ENCODE measurements at regions of chr1 and their contacts with region 1.

Region 1: DNA sequence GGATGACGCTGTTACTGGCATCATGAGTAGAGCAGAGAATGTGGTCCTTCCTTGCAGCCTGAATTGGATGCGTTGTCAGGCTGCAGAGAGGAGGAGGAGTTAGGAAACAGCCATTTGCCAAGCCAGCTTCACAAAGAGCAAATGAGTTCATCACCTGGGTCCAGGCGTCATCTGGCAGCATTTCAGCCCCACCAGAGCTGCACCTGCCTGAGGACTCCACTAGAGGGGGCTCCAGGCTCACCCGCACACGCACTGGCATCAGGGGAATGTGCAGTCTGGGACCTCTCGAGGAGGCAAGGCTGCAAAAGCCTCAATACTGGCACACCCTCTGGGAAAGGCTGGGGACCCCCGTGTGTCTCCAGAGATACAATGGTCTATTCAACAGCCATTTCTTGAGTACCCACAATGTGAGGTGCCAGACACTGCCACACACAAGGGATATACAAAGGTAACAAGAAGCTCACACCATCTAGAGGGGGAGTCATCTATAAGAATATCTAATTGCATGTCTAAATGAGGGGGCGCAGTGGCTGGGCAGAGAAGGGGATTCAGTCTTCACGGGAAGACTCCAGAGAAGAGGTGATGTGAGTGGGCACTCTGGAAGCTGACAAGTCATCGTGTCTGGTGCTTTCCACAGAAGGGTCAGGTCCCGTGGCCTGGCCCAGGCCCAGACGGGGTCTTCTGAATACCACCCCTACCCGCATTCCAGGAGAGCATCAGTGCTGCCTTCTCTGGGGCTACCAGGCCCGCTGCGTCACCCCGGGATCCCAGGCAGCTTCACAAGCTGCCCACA is 53.5 kb upstream of the CNTN2 start:
- DNase-seq: peak; percentile 67
- ATAC-seq: peak; percentile 98
- H3K4me3 ChIP-seq: no peak overlapping the region
- H3K27ac ChIP-seq: no peak overlapping the region
- H3K4me1 ChIP-seq: no peaks in the 10 kb centered on the region
- H3K27me3 ChIP-seq: peaks cover 47% of the 10 kb centered on the region
- CTCF ChIP-seq: peak; percentile 97
- POLR2A ChIP-seq: no peak
- RAD21 ChIP-seq: peak; percentile 97

Region 2: DNA sequence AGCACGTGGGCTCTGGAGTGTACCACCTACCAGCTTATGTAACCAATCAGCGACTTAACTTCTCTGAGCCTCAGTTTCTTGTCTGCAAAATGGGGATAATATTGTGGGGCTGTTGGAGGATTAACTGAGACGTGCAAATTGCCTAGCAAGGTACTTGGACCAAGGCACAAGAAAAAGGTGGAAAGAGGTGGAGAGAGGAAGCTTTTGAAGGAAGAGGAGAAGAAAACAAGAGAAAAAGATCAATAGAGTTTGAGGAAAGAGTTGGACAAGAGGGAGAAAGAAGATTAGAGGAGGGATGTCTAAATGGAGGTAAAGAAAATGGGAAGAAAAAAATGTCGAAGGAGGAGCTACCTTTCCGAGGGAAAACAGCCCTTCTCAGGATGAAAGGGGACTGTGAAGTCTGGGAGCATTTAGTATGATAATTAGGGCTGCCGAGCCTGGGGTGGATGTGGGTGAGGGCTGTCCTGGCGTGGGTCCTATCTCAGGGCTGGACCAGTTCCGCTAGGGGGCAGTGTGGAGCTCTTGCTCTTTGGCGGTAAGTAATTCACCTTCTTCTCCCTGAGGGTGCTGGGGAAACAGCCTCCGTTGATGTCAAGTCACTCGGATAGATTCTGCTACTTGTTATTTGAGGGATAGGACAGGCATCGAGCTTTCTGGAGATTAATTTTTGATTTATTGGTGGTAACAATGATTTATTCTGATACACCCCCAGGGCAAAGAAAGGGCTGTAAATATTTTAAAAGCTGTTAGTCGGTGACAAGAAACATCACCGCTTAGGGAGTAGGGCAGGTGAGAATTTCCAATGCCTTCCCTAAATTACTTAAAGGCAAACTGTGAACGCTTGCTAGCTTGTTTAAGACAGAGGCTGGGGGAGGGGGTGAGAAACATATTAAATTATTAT is 197.8 kb before region 1 on chr1:
- CTCF ChIA-PET with region 1: no interaction called
- POLR2A ChIA-PET with region 1: no interaction called
- dilution Hi-C with region 1: no loop called
- in situ Hi-C with region 1: no loop called
- intact Hi-C with region 1: no loop called
- DNase-seq: peak; percentile 35
- ATAC-seq: peak; percentile 51; the same call in 1 of the 2 replicates
- H3K4me3 ChIP-seq: no peak overlapping the region
- H3K27ac ChIP-seq: no peak overlapping the region
- H3K4me1 ChIP-seq: no peaks in the 10 kb centered on the region
- H3K27me3 ChIP-seq: no peaks in the 10 kb centered on the region; the same call in none of the 2 replicates
- CTCF ChIP-seq: peak; percentile 52
- POLR2A ChIP-seq: no peak
- RAD21 ChIP-seq: no peak; the same call in 1 of the 2 replicates

Region 3: DNA sequence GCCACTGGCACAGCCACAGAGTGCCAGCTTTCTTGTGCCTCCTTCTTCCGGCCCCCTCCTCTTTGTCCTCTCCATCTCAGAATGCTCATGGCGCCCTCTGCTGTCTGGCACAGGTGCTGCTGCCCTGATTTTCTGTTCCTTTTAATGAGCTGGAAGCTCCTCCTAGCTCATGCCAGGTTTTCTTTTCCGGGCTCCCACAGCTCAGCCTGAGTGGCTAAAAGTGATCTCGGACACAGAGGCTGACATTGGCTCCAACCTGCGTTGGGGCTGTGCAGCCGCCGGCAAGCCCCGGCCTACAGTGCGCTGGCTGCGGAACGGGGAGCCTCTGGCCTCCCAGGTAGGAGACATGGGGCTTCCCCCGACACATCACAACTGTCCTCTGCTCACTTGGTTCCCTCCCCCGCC is 72.2 kb after region 1 on chr1:
- CTCF ChIA-PET with region 1: interaction called, 31 read pairs
- POLR2A ChIA-PET with region 1: no interaction called
- dilution Hi-C with region 1: no loop called
- in situ Hi-C with region 1: loop called (anchors 5 kb)
- intact Hi-C with region 1: loop called (anchors 1 kb)
- DNase-seq: peak; percentile 52
- ATAC-seq: peak; percentile 93
- H3K4me3 ChIP-seq: no peak overlapping the region
- H3K27ac ChIP-seq: no peak overlapping the region
- H3K4me1 ChIP-seq: no peaks in the 10 kb centered on the region
- H3K27me3 ChIP-seq: peaks cover 15% of the 10 kb centered on the region
- CTCF ChIP-seq: peak; percentile 82
- POLR2A ChIP-seq: no peak
- RAD21 ChIP-seq: peak; percentile 72

Region 4: DNA sequence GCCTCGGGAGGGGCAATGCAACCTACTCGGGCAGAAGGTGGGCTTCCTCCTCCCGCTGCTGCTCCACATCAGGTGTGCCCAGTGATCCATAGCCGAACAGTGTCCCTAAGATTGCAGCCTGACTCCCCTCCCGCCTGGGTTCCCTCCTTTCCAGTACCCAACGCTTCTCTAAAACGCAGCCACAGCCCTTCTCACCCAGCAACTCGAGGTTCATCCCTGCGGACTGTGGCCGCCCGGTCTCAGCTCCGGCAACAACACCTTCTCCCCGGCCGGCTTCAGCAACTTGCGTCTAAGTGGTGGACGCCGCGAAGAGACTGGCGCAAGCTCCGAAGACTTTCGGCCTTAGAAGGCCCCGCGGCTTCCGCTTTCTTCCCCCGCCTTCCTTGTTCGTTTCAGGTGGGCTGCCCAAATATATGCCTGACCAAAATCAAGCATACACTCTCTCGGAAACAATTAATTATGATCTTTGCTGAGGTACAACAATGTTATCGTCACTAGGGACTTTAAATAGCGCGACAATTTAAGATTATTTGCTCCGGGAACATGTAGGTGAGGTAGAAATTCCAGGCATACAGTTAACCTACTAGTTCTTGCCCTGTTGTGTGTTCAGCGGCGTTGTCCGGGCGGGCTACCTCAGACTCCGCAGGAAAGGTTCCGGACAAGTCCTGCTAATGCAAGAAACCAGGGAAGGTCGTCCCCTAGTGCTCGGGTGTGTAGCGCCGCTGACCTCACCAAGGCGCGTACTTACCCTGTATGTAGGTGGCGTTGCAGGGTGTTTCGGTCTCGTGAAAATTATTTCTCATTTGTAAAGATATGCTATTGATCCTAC is 132.4 kb after region 1 on chr1 and contains the start of gene RBBP5:
- CTCF ChIA-PET with region 1: no interaction called
- POLR2A ChIA-PET with region 1: no interaction called
- dilution Hi-C with region 1: no loop called
- in situ Hi-C with region 1: no loop called
- intact Hi-C with region 1: loop called (anchors 1 kb)
- DNase-seq: peak; percentile 98
- ATAC-seq: peak; percentile 99
- H3K4me3 ChIP-seq: peak within 1 kb of the TSS; percentile 89
- H3K27ac ChIP-seq: peak within 1 kb of the TSS; percentile 88
- H3K4me1 ChIP-seq: peaks cover 2% of the 10 kb centered on the region; the same call in 1 of the 2 replicates
- H3K27me3 ChIP-seq: no peaks in the 10 kb centered on the region
- CTCF ChIP-seq: peak; percentile 89
- POLR2A ChIP-seq: peak; percentile 95
- RAD21 ChIP-seq: peak; percentile 61
- total RNA-seq, gene RBBP5: 33.9 and 37.5 TPM in 2 replicates

Region 5: DNA sequence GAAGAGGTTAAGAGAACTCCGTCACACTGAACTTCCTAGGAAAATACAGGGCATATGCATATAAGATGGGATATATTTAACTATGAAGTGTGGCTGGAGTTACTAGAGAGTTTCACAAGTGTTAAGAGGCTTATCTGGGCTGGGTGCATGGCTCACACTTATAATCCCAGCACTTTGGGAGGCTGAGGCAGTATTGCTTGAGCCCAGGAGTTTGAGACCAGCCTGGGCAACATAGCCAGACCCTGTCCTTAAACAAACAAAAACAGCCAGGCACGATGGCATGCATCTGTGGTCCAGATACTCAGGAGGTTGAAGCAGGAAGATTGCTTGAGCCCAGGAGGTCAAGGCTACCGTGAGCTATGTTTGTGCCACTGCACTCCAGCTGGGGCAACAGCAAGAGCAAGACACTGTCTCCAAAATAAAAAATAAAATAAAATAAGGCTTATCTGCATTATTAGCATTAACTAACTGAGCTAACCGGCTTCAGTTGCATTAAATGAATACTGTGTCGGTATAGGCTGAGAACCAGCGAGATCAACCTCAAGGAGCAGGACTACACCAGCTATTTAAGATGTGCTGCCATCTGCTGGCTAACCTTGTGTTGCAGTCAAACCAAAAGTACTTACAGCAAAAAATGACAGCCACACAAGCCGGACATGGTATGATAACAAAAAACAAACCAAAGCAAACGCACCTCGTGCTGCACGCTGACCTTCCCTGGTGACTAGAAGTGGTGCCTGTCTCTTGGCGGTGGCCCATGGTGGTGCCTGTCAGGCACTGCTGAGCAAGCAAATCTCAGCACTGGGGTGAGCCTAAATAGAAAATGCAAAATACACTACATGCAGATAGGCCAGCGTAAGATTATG is 152.0 kb after region 1 on chr1:
- CTCF ChIA-PET with region 1: no interaction called
- POLR2A ChIA-PET with region 1: no interaction called
- dilution Hi-C with region 1: no loop called
- in situ Hi-C with region 1: no loop called
- intact Hi-C with region 1: loop called (anchors 1 kb)
- DNase-seq: peak; percentile 86
- ATAC-seq: peak; percentile 79
- H3K4me3 ChIP-seq: no peak overlapping the region
- H3K27ac ChIP-seq: no peak overlapping the region
- H3K4me1 ChIP-seq: peaks cover 16% of the 10 kb centered on the region
- H3K27me3 ChIP-seq: no peaks in the 10 kb centered on the region
- CTCF ChIP-seq: peak; percentile 73
- POLR2A ChIP-seq: no peak
- RAD21 ChIP-seq: peak; percentile 71

Region 6: GRCh38 chr1:205301842-205302588 is 312.6 kb after region 1 on chr1:
- CTCF ChIA-PET with region 1: no interaction called
- POLR2A ChIA-PET with region 1: no interaction called
- dilution Hi-C with region 1: no loop called
- in situ Hi-C with region 1: no loop called
- intact Hi-C with region 1: no loop called
- DNase-seq: peak; percentile 74
- ATAC-seq: no peak; the same call in 1 of the 2 replicates
- H3K4me3 ChIP-seq: no peak overlapping the region
- H3K27ac ChIP-seq: peak overlapping the region; percentile 99
- H3K4me1 ChIP-seq: peaks cover 32% of the 10 kb centered on the region
- H3K27me3 ChIP-seq: no peaks in the 10 kb centered on the region
- CTCF ChIP-seq: no peak
- POLR2A ChIP-seq: no peak
- RAD21 ChIP-seq: no peak

Region 7: GRCh38 chr1:205321164-205321958 is 331.9 kb after region 1 on chr1 and contains the start of gene NUAK2:
- CTCF ChIA-PET with region 1: no interaction called
- POLR2A ChIA-PET with region 1: no interaction called
- dilution Hi-C with region 1: no loop called
- in situ Hi-C with region 1: no loop called
- intact Hi-C with region 1: loop called (anchors 2 kb)
- DNase-seq: peak; percentile 90
- ATAC-seq: peak; percentile 92
- H3K4me3 ChIP-seq: peak within 1 kb of the TSS; percentile 94
- H3K27ac ChIP-seq: peak within 1 kb of the TSS; percentile 87
- H3K4me1 ChIP-seq: peaks cover 35% of the 10 kb centered on the region
- H3K27me3 ChIP-seq: no peaks in the 10 kb centered on the region
- CTCF ChIP-seq: peak; percentile 37
- POLR2A ChIP-seq: peak; percentile 94
- RAD21 ChIP-seq: peak; percentile 35
- total RNA-seq, gene NUAK2: 7.2 and 8.1 TPM in 2 replicates

Region 8: DNA sequence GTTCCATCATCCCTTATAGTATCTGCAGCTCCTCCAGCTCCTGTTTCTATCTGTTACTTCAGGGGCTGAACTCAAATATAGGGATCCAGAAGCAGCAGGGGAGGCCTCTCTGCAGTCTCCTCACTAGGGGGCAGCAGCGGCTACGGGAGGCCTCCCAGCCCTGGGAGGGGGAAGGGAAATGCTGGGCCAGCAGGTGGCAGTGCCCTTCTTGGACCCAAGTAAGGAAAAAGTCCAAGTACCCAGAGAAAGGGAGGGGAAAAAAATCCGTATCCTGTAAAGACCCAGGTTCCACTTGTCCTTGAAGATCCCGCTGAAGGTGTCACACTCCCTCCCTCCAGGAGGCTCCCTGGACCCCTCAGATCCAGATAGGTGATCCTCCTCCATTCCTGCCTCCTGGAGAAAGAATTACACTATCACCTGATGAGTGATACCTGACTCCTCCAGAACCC is 346.2 kb after region 1 on chr1:
- CTCF ChIA-PET with region 1: no interaction called
- POLR2A ChIA-PET with region 1: no interaction called
- dilution Hi-C with region 1: no loop called
- in situ Hi-C with region 1: loop called (anchors 10 kb)
- intact Hi-C with region 1: no loop called
- DNase-seq: peak; percentile 62
- ATAC-seq: peak; percentile 95
- H3K4me3 ChIP-seq: no peak overlapping the region
- H3K27ac ChIP-seq: no peak overlapping the region
- H3K4me1 ChIP-seq: no peaks in the 10 kb centered on the region
- H3K27me3 ChIP-seq: peaks cover 69% of the 10 kb centered on the region
- CTCF ChIP-seq: peak; percentile 99
- POLR2A ChIP-seq: no peak
- RAD21 ChIP-seq: peak; percentile 90

Measured in IMR-90 (cell line).